HepG2 (cell line): ENCODE measurements at regions of chr15 and their contacts with region 1.

Region 1: DNA sequence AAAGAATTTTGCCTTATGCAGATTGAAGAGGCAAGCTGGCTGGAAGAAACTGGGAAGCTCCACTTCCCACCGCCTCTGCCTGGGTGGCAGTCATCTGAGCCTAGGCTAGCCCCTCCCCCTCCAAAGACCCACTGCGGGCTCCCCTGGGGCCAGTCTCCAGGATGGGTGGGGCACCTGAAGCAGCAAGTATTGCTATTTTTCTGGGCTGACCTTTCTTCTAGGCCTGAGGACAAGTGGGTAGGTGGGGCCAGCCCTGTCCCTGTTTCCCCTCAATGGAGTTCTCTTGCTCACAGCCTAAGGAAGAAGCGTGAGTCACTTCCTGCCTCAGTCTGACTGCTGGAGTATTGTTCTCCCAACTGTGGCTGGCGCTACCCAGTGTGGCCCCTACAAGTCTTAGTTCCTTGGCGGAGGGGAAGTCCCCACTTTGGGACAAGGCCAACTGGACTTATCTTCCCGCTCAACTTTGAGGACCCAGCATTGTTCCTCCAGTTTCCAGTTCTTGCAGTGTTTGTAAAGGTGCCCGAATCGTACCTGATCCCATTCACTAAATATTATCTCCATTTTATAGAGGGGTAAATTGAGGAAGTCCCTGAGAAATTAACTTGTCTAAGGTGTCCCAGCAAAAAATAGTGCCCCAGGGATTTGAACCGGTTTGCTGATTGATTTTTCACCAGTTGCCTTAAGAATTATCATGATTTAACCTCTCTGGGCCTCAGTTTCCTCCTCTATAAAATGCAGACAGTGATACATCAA is 1.4 kb downstream of the FURIN start:
- DNase-seq: no peak
- ATAC-seq: no peak
- H3K4me3 ChIP-seq: no peak overlapping the region; a peak in 1 of 6 replicates
- H3K27ac ChIP-seq: no peak overlapping the region
- H3K4me1 ChIP-seq: peaks cover 75% of the 10 kb centered on the region
- H3K27me3 ChIP-seq: peaks cover 0 to 49% of the 10 kb centered on the region in 2 experiments
- CTCF ChIP-seq: no peak
- EP300 ChIP-seq: no peak
- POLR2A ChIP-seq: no peak
- RAD21 ChIP-seq: no peak

Region 2: GRCh38 chr15:90489944-90490343 is 379.8 kb before region 1 on chr15:
- CTCF ChIA-PET with region 1: no interaction called
- POLR2A ChIA-PET with region 1: no interaction called
- in situ Hi-C with region 1: no loop called
- intact Hi-C with region 1: loop called (anchors 5 kb)
- DNase-seq: peak; percentile 94
- ATAC-seq: peak; percentile 99
- H3K4me3 ChIP-seq: no peak overlapping the region; a peak in 1 of 6 replicates
- H3K27ac ChIP-seq: peak overlapping the region; percentile 52
- H3K4me1 ChIP-seq: peaks cover 38% of the 10 kb centered on the region
- H3K27me3 ChIP-seq: no peaks in the 10 kb centered on the region
- CTCF ChIP-seq: no peak
- EP300 ChIP-seq: peak; percentile 52 to 92; a peak in 2 of 4 replicates
- POLR2A ChIP-seq: no peak
- RAD21 ChIP-seq: peak; percentile 13; the same call in 1 of the 2 replicates

Region 3: DNA sequence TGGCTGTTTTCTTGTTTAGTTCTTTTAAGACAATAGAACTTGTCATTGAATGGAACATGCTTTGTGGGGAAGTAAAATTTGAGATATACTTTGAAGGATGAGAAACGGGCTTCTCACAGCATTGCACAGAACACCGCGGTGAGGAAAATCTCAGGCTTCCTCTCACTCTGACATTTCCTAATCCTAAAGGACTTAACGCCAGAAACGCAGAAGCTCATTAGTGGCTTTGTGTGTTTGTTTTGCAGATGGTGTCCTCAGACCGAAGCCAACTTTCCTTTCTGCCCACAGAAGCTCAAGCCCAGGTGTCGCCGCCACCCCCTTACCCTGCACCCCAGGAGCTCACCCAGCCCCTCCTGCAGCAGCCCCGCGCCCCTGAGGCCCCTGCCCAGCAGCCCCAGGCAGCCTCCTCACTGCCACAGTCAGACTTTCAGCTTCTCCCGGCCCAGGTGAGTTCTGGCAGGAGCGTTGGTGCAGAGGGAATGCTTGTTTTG is 231.5 kb before region 1 on chr15:
- CTCF ChIA-PET with region 1: no interaction called
- POLR2A ChIA-PET with region 1: no interaction called
- in situ Hi-C with region 1: no loop called
- intact Hi-C with region 1: no loop called
- DNase-seq: no peak
- ATAC-seq: no peak
- H3K4me3 ChIP-seq: no peak overlapping the region
- H3K27ac ChIP-seq: no peak overlapping the region
- H3K4me1 ChIP-seq: no peaks in the 10 kb centered on the region
- H3K27me3 ChIP-seq: no peaks in the 10 kb centered on the region
- CTCF ChIP-seq: no peak
- EP300 ChIP-seq: no peak
- POLR2A ChIP-seq: no peak
- RAD21 ChIP-seq: no peak